ENCODE measurements at regions of chr2 and their contacts with region 1.

Region 1: GRCh38 chr2:28566521-28567041 is 70.7 kb downstream of the PLB1 start:
- DNase-seq: peak; percentile 86
- H3K4me3 Mint-ChIP-seq: peak overlapping the region; percentile 86
- H3K27ac Mint-ChIP-seq: peak overlapping the region; percentile 71
- H3K4me1 Mint-ChIP-seq: peaks cover 24% of the 10 kb centered on the region
- H3K27me3 Mint-ChIP-seq: peaks cover 4% of the 10 kb centered on the region

Region 2: GRCh38 chr2:28544919-28545589 is 21.5 kb before region 1 on chr2:
- intact Hi-C with region 1: loop called (anchors 2 kb)
- DNase-seq: peak; percentile 37
- H3K4me3 Mint-ChIP-seq: peak overlapping the region; percentile 46
- H3K27ac Mint-ChIP-seq: peak overlapping the region; percentile 73
- H3K4me1 Mint-ChIP-seq: peaks cover 31% of the 10 kb centered on the region
- H3K27me3 Mint-ChIP-seq: peaks cover 1% of the 10 kb centered on the region

Region 3: DNA sequence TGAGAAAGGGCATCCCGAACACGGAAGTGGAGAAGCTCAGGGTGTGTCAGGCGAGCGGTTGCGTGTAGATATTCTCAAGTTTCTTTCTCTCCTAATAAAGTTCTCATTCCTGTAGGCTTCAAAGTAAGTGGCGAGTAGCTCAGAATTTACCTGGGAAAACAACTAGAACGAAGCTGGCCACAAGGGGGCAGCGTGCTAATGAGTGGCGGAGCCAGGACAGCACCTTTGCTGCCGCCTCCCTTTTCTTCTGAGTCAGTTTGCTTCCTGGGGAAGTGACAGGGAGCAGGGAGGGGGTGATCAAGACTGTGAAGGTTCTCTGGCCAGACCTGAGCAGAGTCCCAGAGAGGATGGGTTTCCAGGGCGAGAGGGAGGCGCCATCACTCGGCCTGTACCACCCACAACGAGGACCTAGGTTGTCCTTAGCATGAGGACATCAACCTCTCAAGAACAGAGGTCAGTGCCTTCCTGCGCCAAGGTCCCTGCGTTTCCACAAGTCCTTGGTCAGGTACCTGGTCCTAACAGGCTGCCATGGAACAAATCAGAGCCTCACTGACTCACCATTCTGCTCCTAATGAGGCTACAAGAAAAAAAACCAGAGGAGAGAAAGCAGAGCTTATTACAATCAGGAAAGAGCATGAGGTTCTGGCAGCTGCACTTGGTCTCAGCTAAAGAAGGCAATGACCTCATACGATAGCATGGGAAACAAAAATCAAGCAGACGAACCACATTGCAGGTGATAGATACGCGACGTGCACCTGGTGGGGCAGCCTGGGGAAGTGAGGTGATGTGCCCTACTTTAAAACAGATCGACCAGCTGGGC is 27.9 kb after region 1 on chr2:
- intact Hi-C with region 1: loop called (anchors 1 kb)
- DNase-seq: peak; percentile 71
- H3K4me3 Mint-ChIP-seq: peak overlapping the region; percentile 49
- H3K27ac Mint-ChIP-seq: peak overlapping the region; percentile 78
- H3K4me1 Mint-ChIP-seq: peaks cover 30% of the 10 kb centered on the region
- H3K27me3 Mint-ChIP-seq: peaks cover 4% of the 10 kb centered on the region

Region 4: DNA sequence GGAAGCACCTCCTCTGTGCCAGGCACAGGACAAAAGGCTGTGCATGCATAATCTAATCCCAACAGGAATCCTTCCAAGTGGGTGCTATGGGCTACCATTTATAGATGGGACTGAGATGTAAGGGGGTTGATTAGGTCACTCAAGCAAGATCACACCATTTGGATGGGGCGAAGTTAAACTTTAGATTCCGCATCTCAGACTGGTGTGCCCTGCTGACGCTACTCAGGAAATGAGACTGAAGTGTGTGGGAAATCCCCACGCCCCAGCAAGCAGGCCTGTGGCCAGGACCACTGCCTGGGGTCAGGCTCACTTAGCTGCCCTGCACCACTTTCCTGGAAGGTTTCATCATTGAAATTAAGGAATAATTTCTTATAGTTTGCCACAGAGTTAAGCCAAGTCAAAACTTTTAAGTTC is 114.6 kb after region 1 on chr2:
- intact Hi-C with region 1: loop called (anchors 1 kb)
- DNase-seq: peak; percentile 67
- H3K4me3 Mint-ChIP-seq: peak overlapping the region; percentile 73
- H3K27ac Mint-ChIP-seq: peak overlapping the region; percentile 90
- H3K4me1 Mint-ChIP-seq: peaks cover 80% of the 10 kb centered on the region
- H3K27me3 Mint-ChIP-seq: no peaks in the 10 kb centered on the region

Region 5: GRCh38 chr2:28870146-28870891 is 303.7 kb after region 1 on chr2 and contains the start of gene TRMT61B:
- intact Hi-C with region 1: loop called (anchors 1 kb)
- DNase-seq: peak; percentile 97
- H3K4me3 Mint-ChIP-seq: peak within 1 kb of the TSS; percentile 97
- H3K27ac Mint-ChIP-seq: peak within 1 kb of the TSS; percentile 93
- H3K4me1 Mint-ChIP-seq: peaks cover 23% of the 10 kb centered on the region
- H3K27me3 Mint-ChIP-seq: peaks cover 6% of the 10 kb centered on the region
- total RNA-seq, gene TRMT61B: 18.4 and 21.4 TPM in 2 replicates

Region 6: GRCh38 chr2:29014811-29015421 is 448.3 kb after region 1 on chr2:
- intact Hi-C with region 1: loop called (anchors 5 kb)
- DNase-seq: peak; percentile 65
- H3K4me3 Mint-ChIP-seq: peak overlapping the region; percentile 88
- H3K27ac Mint-ChIP-seq: peak overlapping the region; percentile 99
- H3K4me1 Mint-ChIP-seq: peaks cover 65% of the 10 kb centered on the region
- H3K27me3 Mint-ChIP-seq: peaks cover 2% of the 10 kb centered on the region